Right cardiac atrium (tissue), 5 donors: ENCODE measurements at regions of chr1 and their contacts with region 1.

Region 1: DNA sequence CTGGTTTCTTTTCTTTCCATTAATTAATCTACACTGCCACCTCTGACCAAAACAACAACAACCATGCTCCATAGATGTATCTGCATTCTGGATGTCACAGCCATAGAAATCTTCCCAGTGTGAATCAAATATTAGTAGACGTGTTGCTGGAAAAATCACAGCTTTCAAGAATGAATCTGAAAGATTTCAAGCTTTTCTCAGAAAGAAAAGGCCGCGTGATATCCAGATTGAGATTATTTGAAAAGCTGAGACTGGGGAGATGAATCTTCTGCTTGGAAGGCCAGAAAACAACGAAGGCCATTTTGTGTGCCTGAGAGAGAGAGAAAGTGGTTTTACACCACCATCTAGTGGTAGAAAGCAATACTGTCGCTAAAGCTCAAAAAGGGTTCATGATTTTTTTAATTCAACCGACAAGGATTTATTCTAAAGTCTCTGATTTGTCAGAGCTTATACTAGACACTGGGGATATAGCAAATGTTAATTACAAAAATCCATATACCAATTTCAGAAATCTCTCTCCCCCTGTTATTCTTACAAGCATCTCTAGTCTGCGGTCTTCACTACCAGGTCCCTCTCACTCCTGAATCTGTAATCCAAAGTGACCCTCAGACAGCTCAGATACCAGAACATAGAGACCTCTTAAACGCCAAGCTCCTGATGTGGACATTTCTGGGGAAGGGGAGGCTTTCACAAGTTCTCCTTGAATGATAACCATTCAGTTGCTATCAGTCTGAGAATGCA is 87.5 kb upstream of the SGIP1 start:
- DNase-seq: no peak
- ATAC-seq: peak; percentile 46 to 68
- H3K4me3 ChIP-seq: no peak overlapping the region
- H3K27ac ChIP-seq: no peak overlapping the region
- H3K4me1 ChIP-seq: peaks cover 4% of the 10 kb centered on the region
- H3K27me3 ChIP-seq: no peaks in the 10 kb centered on the region

Region 2: DNA sequence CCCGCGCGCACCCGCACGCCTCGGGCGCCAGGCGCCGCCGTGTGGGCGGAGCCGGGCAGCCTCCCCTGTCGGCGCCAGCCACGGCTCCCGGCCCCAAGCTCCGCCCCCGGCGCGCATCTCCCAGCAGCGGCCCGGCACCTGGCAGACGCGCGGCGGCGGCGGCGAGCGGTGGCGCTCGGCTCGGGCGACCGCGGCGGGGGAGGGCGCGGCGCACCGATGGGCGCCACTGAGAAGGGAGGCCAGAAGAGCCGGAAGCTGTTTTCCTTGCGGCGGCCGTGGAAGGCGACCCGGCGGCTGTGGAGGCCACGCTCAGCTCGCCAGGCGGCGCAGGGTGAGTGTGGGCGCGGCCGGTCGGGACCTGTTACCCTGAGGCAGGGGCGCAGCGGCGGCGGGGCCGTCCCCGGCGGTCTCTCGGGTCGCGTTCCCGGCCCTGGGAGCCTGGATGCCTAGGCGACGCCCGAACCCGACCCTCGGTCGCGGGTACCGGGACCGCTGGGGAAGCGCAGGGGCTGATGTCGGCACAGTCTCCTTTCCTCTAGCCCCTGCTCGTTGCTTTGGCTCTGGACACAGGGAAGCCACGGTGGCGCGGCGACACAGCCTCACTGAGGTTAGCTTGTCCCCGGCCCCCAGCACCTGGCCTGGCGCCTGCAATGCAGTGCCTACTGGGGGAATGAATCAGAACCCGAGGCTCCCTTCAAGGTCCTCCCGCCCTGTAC is 1192.0 kb before region 1 on chr1:
- intact Hi-C with region 1: loop called in 1 of 4 experiments (anchors 10 kb)
- DNase-seq: peak; percentile 77 to 92 (median 91)
- ATAC-seq: peak; percentile 90 to 93
- H3K4me3 ChIP-seq: peak overlapping the region; percentile 78
- H3K27ac ChIP-seq: peak overlapping the region; percentile 65
- H3K4me1 ChIP-seq: no peaks in the 10 kb centered on the region
- H3K27me3 ChIP-seq: no peaks in the 10 kb centered on the region

Region 3: GRCh38 chr1:65958561-65959350 is 487.7 kb before region 1 on chr1:
- intact Hi-C with region 1: loop called in 3 of 4 experiments (anchors 5 kb)
- DNase-seq: peak in 2 of 3 donors; percentile 13 to 73
- ATAC-seq: peak in 1 of 2 donors; percentile 59
- H3K4me3 ChIP-seq: no peak overlapping the region
- H3K27ac ChIP-seq: no peak overlapping the region
- H3K4me1 ChIP-seq: no peaks in the 10 kb centered on the region
- H3K27me3 ChIP-seq: no peaks in the 10 kb centered on the region

Region 4: GRCh38 chr1:66253330-66253921 is 193.0 kb before region 1 on chr1:
- intact Hi-C with region 1: loop called (anchors 2 to 5 kb)
- DNase-seq: no peak
- ATAC-seq: peak; percentile 84 to 89
- H3K4me3 ChIP-seq: no peak overlapping the region
- H3K27ac ChIP-seq: no peak overlapping the region
- H3K4me1 ChIP-seq: no peaks in the 10 kb centered on the region
- H3K27me3 ChIP-seq: no peaks in the 10 kb centered on the region

Region 5: DNA sequence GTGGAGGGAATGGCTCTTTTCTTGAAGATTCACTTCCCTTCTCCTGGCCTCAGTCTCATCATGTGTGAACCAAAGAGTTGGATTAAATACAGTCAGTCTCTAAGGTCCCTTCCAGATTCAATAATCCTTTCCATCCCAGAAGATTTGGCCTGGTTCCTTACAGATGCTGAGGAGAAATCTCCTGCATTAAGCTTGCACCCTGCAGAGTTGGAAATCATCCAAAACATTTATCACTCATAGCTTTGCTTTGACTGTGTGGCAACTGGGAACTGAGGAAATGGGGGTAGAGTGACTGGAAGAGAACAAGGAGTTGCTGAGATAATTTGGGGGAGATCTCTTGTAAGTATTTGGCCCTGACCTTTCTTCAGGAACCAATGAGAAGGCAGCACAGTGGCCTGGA is 133.0 kb before region 1 on chr1:
- intact Hi-C with region 1: no loop called
- DNase-seq: no peak
- ATAC-seq: no peak
- H3K4me3 ChIP-seq: no peak overlapping the region
- H3K27ac ChIP-seq: no peak overlapping the region
- H3K4me1 ChIP-seq: peaks cover 4% of the 10 kb centered on the region
- H3K27me3 ChIP-seq: no peaks in the 10 kb centered on the region

Region 6: GRCh38 chr1:66331657-66332547 is 114.5 kb before region 1 on chr1:
- intact Hi-C with region 1: loop called in 2 of 4 experiments (anchors 10 kb)
- DNase-seq: peak; percentile 77 to 89 (median 87)
- ATAC-seq: peak; percentile 69 to 71
- H3K4me3 ChIP-seq: peak overlapping the region; percentile 85
- H3K27ac ChIP-seq: peak overlapping the region; percentile 55
- H3K4me1 ChIP-seq: peaks cover 6% of the 10 kb centered on the region
- H3K27me3 ChIP-seq: no peaks in the 10 kb centered on the region